B cell (primary cell): ENCODE measurements at regions of chr10 and their contacts with region 1.

Region 1: GRCh38 chr10:91251430-91252056 is 31.1 kb downstream of the PCGF5 start:
- DNase-seq: peak; percentile 75
- ATAC-seq: peak; percentile 82
- H3K4me3 ChIP-seq: no peak overlapping the region
- H3K4me3 Mint-ChIP-seq: no peak overlapping the region
- H3K27ac ChIP-seq: no peak overlapping the region
- H3K27ac Mint-ChIP-seq: no peak overlapping the region
- H3K4me1 ChIP-seq: no peaks in the 10 kb centered on the region
- H3K4me1 Mint-ChIP-seq: peaks cover 2% of the 10 kb centered on the region
- H3K27me3 ChIP-seq: no peaks in the 10 kb centered on the region
- H3K27me3 Mint-ChIP-seq: no peaks in the 10 kb centered on the region
- CTCF ChIP-seq: peak; percentile 97

Region 2: DNA sequence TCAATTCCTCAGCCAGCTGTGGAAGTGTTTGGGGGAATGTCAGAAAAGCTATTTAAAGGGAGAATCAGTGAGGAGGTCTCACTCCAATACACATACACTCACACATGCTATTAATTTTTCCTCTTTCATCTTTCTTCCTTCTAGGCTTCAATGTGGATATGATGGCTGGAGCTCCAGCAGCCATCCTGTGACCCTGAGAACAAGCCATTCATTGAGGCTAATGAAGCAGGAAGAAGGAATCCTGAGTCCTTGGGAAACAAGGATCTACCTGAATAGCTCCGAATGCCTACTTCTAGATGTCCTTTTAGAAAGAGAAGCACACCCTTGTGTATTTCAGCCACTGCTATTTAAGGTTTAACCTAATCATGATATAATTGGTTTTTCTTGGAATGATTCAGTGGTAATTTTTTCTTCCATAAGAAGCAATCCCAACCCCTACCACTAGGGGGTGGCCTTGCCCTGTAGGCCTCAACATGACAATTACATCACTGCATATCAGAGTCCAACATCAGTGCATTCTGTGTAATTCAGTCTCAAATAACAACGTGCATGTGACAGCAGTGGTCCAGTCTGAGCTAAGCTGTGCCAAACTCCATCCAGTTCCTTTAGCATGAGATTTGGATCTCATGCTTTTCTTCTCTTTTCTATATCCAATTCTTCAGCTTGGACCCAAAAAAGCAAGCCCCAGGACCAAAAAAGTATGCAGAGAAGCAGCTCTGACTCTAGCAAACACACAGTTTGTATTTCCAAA is 245.4 kb before region 1 on chr10:
- CTCF ChIA-PET with region 1: interaction called, 261 read pairs
- POLR2A ChIA-PET with region 1: interaction called, 4 read pairs
- intact Hi-C with region 1: loop called (anchors 1 kb)
- DNase-seq: peak; percentile 79
- ATAC-seq: peak; percentile 89
- H3K4me3 ChIP-seq: peak overlapping the region in 3 of 5 experiments; percentile 2 to 47 (median 15)
- H3K4me3 Mint-ChIP-seq: peak overlapping the region; percentile 78
- H3K27ac ChIP-seq: peak overlapping the region; percentile 74 to 79
- H3K27ac Mint-ChIP-seq: peak overlapping the region; percentile 87
- H3K4me1 ChIP-seq: peaks cover 35 to 38% of the 10 kb centered on the region in 2 donors
- H3K4me1 Mint-ChIP-seq: peaks cover 40% of the 10 kb centered on the region
- H3K27me3 ChIP-seq: no peaks in the 10 kb centered on the region
- H3K27me3 Mint-ChIP-seq: no peaks in the 10 kb centered on the region
- CTCF ChIP-seq: peak; percentile 98

Region 3: DNA sequence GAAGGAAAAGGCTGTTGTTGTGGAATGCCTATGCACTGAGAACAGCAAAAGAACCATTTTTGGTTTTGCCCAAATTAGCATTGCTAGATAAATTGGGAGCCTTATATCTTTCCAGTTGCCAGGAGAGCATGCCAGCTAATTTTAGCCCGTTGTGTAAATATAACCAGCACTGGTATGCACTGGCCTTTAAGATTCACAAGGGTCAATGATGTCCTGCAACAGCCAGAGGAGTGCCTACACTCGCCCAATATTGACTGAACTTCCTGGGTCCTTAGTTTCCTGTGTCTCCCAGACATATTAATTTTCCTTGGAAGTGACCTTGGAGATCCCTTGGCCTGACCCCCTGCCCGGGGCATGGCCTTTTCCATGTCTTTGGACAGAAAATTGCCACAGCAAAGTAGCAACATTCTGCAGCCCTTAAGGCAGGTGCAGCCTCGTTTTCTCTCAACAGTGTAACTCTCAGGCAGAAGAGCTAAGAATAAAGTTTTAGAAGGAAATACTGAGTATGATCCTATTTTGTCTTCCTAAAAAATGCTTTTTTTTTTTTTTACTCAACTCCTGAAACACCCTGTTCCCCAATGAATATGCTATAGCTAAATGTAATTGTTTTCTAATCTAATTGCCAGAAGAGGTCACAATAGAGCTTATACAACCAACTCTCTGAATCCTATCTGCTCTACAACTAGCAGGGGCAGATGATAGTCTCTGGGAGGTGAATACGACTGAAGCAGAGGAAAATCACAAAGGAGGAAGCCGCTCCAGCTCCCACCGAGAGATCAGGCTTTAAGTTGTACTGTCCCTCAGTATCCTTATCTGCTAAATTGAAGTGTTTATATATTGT is 163.0 kb before region 1 on chr10:
- CTCF ChIA-PET with region 1: interaction called, 328 read pairs
- POLR2A ChIA-PET with region 1: interaction called, 4 read pairs
- intact Hi-C with region 1: loop called (anchors 1 kb)
- DNase-seq: peak; percentile 57
- ATAC-seq: peak; percentile 79
- H3K4me3 ChIP-seq: no peak overlapping the region
- H3K4me3 Mint-ChIP-seq: no peak overlapping the region
- H3K27ac ChIP-seq: no peak overlapping the region
- H3K27ac Mint-ChIP-seq: no peak overlapping the region
- H3K4me1 ChIP-seq: no peaks in the 10 kb centered on the region
- H3K4me1 Mint-ChIP-seq: peaks cover 3% of the 10 kb centered on the region
- H3K27me3 ChIP-seq: no peaks in the 10 kb centered on the region
- H3K27me3 Mint-ChIP-seq: no peaks in the 10 kb centered on the region
- CTCF ChIP-seq: peak; percentile 48

Region 4: DNA sequence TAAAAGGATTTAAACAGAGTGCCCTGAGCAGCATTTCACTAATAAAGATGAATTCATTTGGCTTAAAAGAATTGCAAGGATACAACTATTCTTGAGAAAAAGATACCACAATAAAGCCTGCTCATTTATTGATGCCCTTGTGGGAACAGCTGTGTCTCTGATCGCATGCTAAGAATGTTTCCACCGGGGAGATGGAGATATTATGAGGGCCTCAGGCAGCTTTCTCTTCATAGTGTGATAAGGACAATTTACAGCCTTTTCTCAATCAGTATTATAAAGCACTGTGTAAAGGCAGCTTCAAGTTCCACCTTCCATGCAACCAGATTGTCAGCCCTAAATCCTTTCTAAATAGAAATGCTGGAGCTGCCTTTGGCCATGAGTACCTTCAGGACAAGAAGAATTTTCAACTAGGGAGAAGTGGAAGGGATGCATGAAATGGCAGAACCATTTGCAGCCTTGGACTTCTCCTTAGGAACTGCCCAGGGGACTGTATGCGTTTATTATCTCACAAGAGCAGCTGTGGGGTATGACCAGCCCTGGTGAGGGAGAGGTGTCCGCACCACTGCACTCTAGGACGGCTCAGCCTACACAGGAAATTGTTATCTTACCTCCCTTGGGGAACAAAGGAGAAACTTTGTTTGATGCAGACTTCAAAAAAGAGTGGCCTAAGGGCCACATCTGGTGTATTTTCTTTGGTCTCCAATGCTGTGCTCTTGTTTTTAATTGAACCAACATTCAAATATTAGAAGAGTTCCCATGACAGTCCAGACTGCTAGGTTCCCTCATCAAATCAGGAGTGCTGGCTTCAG is 148.0 kb before region 1 on chr10:
- CTCF ChIA-PET with region 1: interaction called, 16 read pairs
- POLR2A ChIA-PET with region 1: no interaction called
- intact Hi-C with region 1: no loop called
- DNase-seq: peak; percentile 31
- ATAC-seq: peak; percentile 84
- H3K4me3 ChIP-seq: peak overlapping the region in 1 of 5 experiments; percentile 16
- H3K4me3 Mint-ChIP-seq: peak overlapping the region; percentile 70
- H3K27ac ChIP-seq: peak overlapping the region in 1 of 2 donors; percentile 43
- H3K27ac Mint-ChIP-seq: peak overlapping the region; percentile 76
- H3K4me1 ChIP-seq: peaks cover 22 to 28% of the 10 kb centered on the region in 2 donors
- H3K4me1 Mint-ChIP-seq: peaks cover 35% of the 10 kb centered on the region
- H3K27me3 ChIP-seq: no peaks in the 10 kb centered on the region
- H3K27me3 Mint-ChIP-seq: no peaks in the 10 kb centered on the region
- CTCF ChIP-seq: no peak

Region 5: GRCh38 chr10:91201213-91201996 is 50.1 kb before region 1 on chr10:
- CTCF ChIA-PET with region 1: interaction called, 19 read pairs
- POLR2A ChIA-PET with region 1: interaction called, 3 read pairs
- intact Hi-C with region 1: loop called (anchors 5 kb)
- DNase-seq: peak; percentile 86
- ATAC-seq: peak; percentile 85
- H3K4me3 ChIP-seq: peak overlapping the region; percentile 1 to 60 (median 18)
- H3K4me3 Mint-ChIP-seq: peak overlapping the region; percentile 79
- H3K27ac ChIP-seq: peak overlapping the region; percentile 73 to 77
- H3K27ac Mint-ChIP-seq: peak overlapping the region; percentile 76
- H3K4me1 ChIP-seq: peaks cover 78 to 83% of the 10 kb centered on the region in 2 donors
- H3K4me1 Mint-ChIP-seq: peaks cover 86% of the 10 kb centered on the region
- H3K27me3 ChIP-seq: no peaks in the 10 kb centered on the region
- H3K27me3 Mint-ChIP-seq: no peaks in the 10 kb centered on the region
- CTCF ChIP-seq: no peak

Region 6: GRCh38 chr10:91220194-91220953 is 31.2 kb before region 1 on chr10 and contains the start of gene PCGF5:
- CTCF ChIA-PET with region 1: interaction called, 16 read pairs
- POLR2A ChIA-PET with region 1: no interaction called
- intact Hi-C with region 1: loop called (anchors 2 kb)
- DNase-seq: peak; percentile 96
- ATAC-seq: peak; percentile 94
- H3K4me3 ChIP-seq: peak within 1 kb of the TSS; percentile 60 to 89 (median 76)
- H3K4me3 Mint-ChIP-seq: peak within 1 kb of the TSS; percentile 92
- H3K27ac ChIP-seq: peak within 1 kb of the TSS; percentile 71 to 90
- H3K27ac Mint-ChIP-seq: peak within 1 kb of the TSS; percentile 97
- H3K4me1 ChIP-seq: peaks cover 34 to 36% of the 10 kb centered on the region in 2 donors
- H3K4me1 Mint-ChIP-seq: peaks cover 68% of the 10 kb centered on the region
- H3K27me3 ChIP-seq: no peaks in the 10 kb centered on the region
- H3K27me3 Mint-ChIP-seq: no peaks in the 10 kb centered on the region
- CTCF ChIP-seq: peak; percentile 14
- total RNA-seq, gene PCGF5: 102 TPM in 2 replicates

Region 7: GRCh38 chr10:91238191-91238590 is 13.4 kb before region 1 on chr10:
- CTCF ChIA-PET with region 1: interaction called, 11 read pairs
- POLR2A ChIA-PET with region 1: no interaction called
- intact Hi-C with region 1: no loop called
- DNase-seq: no peak
- ATAC-seq: no peak
- H3K4me3 ChIP-seq: no peak overlapping the region
- H3K4me3 Mint-ChIP-seq: no peak overlapping the region
- H3K27ac ChIP-seq: no peak overlapping the region
- H3K27ac Mint-ChIP-seq: peak overlapping the region; percentile 37
- H3K4me1 ChIP-seq: no peaks in the 10 kb centered on the region
- H3K4me1 Mint-ChIP-seq: peaks cover 11% of the 10 kb centered on the region
- H3K27me3 ChIP-seq: no peaks in the 10 kb centered on the region
- H3K27me3 Mint-ChIP-seq: no peaks in the 10 kb centered on the region
- CTCF ChIP-seq: no peak

Region 8: DNA sequence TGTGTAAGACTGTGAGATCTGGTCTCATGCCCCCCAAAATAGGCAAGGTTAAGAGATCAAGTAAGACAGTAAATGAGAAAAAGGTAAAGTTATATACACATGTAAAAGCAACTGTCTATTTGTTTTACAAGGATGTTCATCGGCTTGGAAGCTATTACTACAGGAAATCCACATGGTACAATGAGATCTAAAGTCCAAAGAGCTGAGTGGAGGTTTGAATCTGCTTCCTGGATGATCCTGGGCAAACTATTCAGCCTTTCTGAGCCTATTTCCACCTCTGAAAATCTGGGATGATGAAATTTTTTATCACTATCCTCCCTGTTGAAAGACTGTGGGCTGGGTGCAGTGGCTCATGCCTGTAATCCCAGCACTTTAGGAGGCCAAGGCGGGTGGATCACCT is 1199.4 kb after region 1 on chr10:
- CTCF ChIA-PET with region 1: no interaction called
- POLR2A ChIA-PET with region 1: no interaction called
- intact Hi-C with region 1: no loop called
- DNase-seq: no peak
- ATAC-seq: no peak
- H3K4me3 ChIP-seq: no peak overlapping the region
- H3K4me3 Mint-ChIP-seq: no peak overlapping the region
- H3K27ac ChIP-seq: no peak overlapping the region
- H3K27ac Mint-ChIP-seq: no peak overlapping the region
- H3K4me1 ChIP-seq: no peaks in the 10 kb centered on the region
- H3K4me1 Mint-ChIP-seq: no peaks in the 10 kb centered on the region
- H3K27me3 ChIP-seq: no peaks in the 10 kb centered on the region
- H3K27me3 Mint-ChIP-seq: no peaks in the 10 kb centered on the region
- CTCF ChIP-seq: no peak